ENCODE measurements at regions of chr9 and their contacts with region 1.

Region 1: DNA sequence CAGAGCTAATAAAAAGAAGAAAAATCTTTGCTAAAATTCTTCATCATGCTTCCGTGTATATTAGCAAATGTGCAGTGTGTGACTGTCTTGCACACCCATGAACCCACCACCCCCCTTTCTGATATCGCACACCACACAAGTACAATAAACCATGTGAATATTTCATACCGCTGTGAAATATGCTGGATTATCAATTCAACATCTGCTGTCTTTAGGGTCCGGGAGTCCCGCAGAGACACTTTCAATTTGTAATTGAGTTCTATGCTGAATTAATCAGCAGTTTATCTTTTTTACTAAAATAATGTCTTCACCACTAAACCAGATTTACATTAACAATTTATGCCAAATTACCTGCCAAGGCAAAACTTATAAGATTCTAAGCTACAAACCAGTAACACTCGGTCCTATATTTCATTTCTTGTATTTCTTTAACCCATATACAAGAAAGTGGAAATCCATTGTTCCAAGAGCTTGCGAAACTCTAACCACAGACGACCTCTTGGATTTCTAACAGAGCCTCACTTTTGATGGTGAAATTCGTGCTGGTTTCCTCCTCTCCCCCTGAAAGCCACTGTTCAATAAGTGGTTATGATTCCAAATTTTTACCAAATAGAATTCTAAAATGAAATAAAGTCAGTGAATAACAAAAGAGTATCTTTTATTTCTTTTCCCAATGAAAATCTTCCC is 44.2 kb downstream of the PSMB7 start:
- DNase-seq: peak in 1 of 2 experiments; percentile 43
- H3K4me3 ChIP-seq: no peak overlapping the region
- H3K27ac ChIP-seq: 0 out of 2 replicates have a peak overlapping the region, but pooled peaks have one; percentile 32
- H3K4me1 ChIP-seq: peaks cover 36% of the 10 kb centered on the region
- H3K27me3 ChIP-seq: no peaks in the 10 kb centered on the region
- CTCF ChIP-seq: no peak

Region 2: DNA sequence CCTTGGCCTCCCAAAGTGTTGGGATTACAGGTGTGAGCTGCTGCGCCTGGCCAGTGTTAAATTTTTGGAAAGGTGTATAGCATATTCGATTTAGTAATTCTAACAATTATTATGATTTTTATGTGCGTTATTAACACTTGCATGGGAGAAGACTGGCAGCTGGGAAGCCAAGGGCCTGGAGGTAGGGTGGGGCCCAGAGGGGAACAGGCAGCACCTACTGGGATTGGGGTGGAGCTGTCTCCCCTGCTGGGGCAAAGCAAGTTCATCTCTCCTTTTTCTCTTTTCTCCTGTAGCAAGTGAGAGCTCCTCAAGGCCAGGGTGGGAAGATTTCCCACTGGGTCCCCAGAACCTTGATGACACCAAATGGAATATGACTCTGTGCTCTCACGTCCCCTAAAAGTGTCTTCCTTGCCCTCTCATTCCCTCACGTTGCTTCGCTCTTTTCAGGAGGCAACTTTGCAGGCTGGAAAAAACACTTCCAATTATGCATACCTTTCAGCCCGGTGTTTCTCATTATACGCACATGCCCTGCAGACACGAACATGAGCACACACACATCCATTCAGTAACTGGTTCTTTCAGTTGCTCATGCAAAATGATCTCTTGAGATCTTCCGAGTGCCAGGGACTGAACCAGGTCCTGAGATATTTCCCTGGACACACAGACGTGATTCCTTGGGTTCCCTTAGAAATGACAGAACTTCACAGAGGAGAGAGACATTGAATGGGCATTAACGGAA is 382.6 kb before region 1 on chr9:
- CTCF ChIA-PET with region 1: no interaction called
- POLR2A ChIA-PET with region 1: no interaction called
- intact Hi-C with region 1: no loop called
- DNase-seq: no peak
- H3K4me3 ChIP-seq: no peak overlapping the region
- H3K27ac ChIP-seq: no peak overlapping the region
- H3K4me1 ChIP-seq: no peaks in the 10 kb centered on the region
- H3K27me3 ChIP-seq: peaks cover 50% of the 10 kb centered on the region
- CTCF ChIP-seq: no peak

Region 3: DNA sequence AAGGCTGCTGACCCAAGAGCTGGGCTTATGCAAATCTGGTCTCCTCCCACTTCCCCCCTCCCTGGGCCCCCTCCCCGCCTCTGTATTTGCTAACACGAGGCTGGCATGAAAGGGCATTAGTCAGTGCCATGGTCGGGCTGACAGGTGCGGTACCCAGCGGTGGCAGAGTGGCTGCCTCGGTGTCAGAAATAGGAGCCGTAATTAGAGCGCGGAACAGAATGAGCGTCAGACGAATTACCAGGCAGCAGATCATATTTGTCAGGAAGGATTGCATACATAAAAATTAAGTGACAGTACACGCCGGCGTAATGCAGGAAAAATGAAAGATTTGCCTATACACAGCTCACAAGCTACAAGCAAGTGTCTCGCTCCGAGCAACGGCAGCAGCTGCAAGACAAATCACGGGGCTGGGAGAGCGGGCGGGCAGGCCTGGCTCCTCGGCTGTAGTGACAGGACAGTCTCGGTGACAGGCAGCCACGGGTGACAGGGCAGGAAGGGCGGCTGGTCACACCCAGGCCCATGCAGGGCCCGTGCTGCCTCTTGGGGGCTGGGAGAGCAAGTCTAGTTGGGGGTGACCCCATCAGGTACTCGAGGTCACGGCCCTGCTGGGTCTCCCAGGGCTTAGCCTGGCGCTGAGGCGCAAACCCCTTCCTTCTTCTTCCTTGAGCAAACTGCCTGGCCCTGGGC is 40.9 kb before region 1 on chr9:
- CTCF ChIA-PET with region 1: no interaction called
- POLR2A ChIA-PET with region 1: no interaction called
- intact Hi-C with region 1: no loop called
- DNase-seq: no peak
- H3K4me3 ChIP-seq: no peak overlapping the region
- H3K27ac ChIP-seq: no peak overlapping the region
- H3K4me1 ChIP-seq: no peaks in the 10 kb centered on the region
- H3K27me3 ChIP-seq: no peaks in the 10 kb centered on the region
- CTCF ChIP-seq: no peak

Region 4: GRCh38 chr9:124386201-124386600 is 15.2 kb after region 1 on chr9:
- CTCF ChIA-PET with region 1: no interaction called
- POLR2A ChIA-PET with region 1: interaction called, 5 read pairs
- intact Hi-C with region 1: loop called (anchors 2 kb)
- DNase-seq: no peak
- H3K4me3 ChIP-seq: no peak overlapping the region
- H3K27ac ChIP-seq: peak overlapping the region; percentile 17; the same call in 1 of the 2 replicates
- H3K4me1 ChIP-seq: peaks cover 50% of the 10 kb centered on the region
- H3K27me3 ChIP-seq: no peaks in the 10 kb centered on the region
- CTCF ChIP-seq: no peak

Measured in PC-9 (cell line).